ENCODE measurements at regions of chr7 and their contacts with region 1.

Region 1: GRCh38 chr7:75738987-75739795 is 450 bp upstream of the HIP1 start:
- DNase-seq: peak; percentile 99 to 100 (median 99)
- ATAC-seq: peak; percentile 92
- H3K4me3 ChIP-seq: peak overlapping the region; percentile 85 to 92
- H3K4me3 Mint-ChIP-seq: peak overlapping the region; percentile 99
- H3K27ac ChIP-seq: peak overlapping the region; percentile 71
- H3K27ac Mint-ChIP-seq: peak overlapping the region; percentile 98
- H3K4me1 ChIP-seq: peaks cover 13% of the 10 kb centered on the region
- H3K4me1 Mint-ChIP-seq: peaks cover 15% of the 10 kb centered on the region
- H3K27me3 ChIP-seq: peaks cover 0 to 4% of the 10 kb centered on the region in 2 experiments
- H3K27me3 Mint-ChIP-seq: no peaks in the 10 kb centered on the region
- CTCF ChIP-seq: no peak

Region 2: GRCh38 chr7:75072978-75073282 is 666.3 kb before region 1 on chr7:
- CTCF ChIA-PET with region 1: no interaction called
- POLR2A ChIA-PET with region 1: no interaction called
- intact Hi-C with region 1: loop called in 1 of 2 experiments (anchors 1 kb)
- DNase-seq: peak in 1 of 9 experiments; percentile 12
- ATAC-seq: no peak
- H3K4me3 ChIP-seq: peak overlapping the region; percentile 57 to 80
- H3K4me3 Mint-ChIP-seq: peak overlapping the region; percentile 94
- H3K27ac ChIP-seq: peak overlapping the region; percentile 68 to 74
- H3K27ac Mint-ChIP-seq: peak overlapping the region; percentile 96
- H3K4me1 ChIP-seq: no peaks in the 10 kb centered on the region
- H3K4me1 Mint-ChIP-seq: peaks cover 10% of the 10 kb centered on the region
- H3K27me3 ChIP-seq: no peaks in the 10 kb centered on the region
- H3K27me3 Mint-ChIP-seq: no peaks in the 10 kb centered on the region
- CTCF ChIP-seq: no peak

Region 3: GRCh38 chr7:75727881-75728592 is 11.2 kb before region 1 on chr7:
- CTCF ChIA-PET with region 1: no interaction called
- POLR2A ChIA-PET with region 1: interaction called, 10 read pairs
- intact Hi-C with region 1: no loop called
- DNase-seq: peak in 8 of 9 experiments; percentile 28 to 92 (median 52)
- ATAC-seq: peak; percentile 87
- H3K4me3 ChIP-seq: peak overlapping the region in 1 of 2 experiments; percentile 18
- H3K4me3 Mint-ChIP-seq: peak overlapping the region; percentile 44
- H3K27ac ChIP-seq: peak overlapping the region; percentile 33 to 66
- H3K27ac Mint-ChIP-seq: peak overlapping the region; percentile 76
- H3K4me1 ChIP-seq: peaks cover 25% of the 10 kb centered on the region
- H3K4me1 Mint-ChIP-seq: peaks cover 23% of the 10 kb centered on the region
- H3K27me3 ChIP-seq: no peaks in the 10 kb centered on the region
- H3K27me3 Mint-ChIP-seq: no peaks in the 10 kb centered on the region
- CTCF ChIP-seq: no peak

Region 4: GRCh38 chr7:75819711-75820110 is 80.5 kb after region 1 on chr7:
- CTCF ChIA-PET with region 1: no interaction called
- POLR2A ChIA-PET with region 1: no interaction called
- intact Hi-C with region 1: no loop called
- DNase-seq: no peak
- ATAC-seq: no peak
- H3K4me3 ChIP-seq: no peak overlapping the region
- H3K4me3 Mint-ChIP-seq: no peak overlapping the region
- H3K27ac ChIP-seq: no peak overlapping the region
- H3K27ac Mint-ChIP-seq: no peak overlapping the region
- H3K4me1 ChIP-seq: no peaks in the 10 kb centered on the region
- H3K4me1 Mint-ChIP-seq: no peaks in the 10 kb centered on the region
- H3K27me3 ChIP-seq: peaks cover 0 to 3% of the 10 kb centered on the region in 2 experiments
- H3K27me3 Mint-ChIP-seq: peaks cover 9% of the 10 kb centered on the region
- CTCF ChIP-seq: no peak

Region 5: DNA sequence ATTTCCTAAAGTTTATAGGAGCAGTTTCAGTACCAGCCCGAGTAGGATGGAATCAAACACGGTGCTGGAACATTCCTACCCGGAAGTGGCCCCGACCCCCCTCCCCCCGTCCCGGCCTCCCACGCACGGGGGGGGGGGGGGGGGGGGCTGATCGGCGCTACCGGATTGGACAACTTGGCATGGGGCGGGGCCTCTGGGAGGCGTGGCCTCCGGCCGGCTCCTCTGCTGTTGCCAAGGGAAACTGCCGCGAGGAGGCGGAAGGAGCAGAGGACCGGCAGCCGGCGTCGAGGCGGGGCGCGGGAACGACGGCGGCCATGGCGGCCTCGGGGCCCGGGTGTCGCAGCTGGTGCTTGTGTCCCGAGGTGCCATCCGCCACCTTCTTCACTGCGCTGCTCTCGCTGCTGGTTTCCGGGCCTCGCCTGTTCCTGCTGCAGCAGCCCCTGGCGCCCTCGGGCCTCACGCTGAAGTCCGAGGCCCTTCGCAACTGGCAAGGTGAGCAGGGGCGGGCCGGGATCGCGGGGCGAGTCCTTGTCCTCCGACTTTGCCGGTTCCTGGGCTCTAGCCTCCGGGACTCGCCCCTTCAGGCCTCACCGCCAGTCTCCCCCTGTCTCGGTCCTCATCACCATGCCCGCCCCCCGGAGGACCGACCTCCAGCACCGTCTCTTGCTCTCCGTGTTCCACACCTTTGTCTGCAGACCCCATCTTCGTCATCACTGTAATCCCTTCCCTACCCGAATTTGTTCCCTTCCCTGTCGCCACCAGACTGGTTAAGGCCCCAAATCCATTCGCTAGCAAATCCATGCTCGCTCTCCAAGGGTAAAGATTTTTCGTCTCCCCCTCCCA is 139.8 kb after region 1 on chr7 and contains the start of gene RHBDD2:
- CTCF ChIA-PET with region 1: no interaction called
- POLR2A ChIA-PET with region 1: no interaction called
- intact Hi-C with region 1: loop called (anchors 2 to 10 kb)
- DNase-seq: peak; percentile 95 to 98 (median 97)
- ATAC-seq: peak; percentile 93
- H3K4me3 ChIP-seq: peak within 1 kb of the TSS; percentile 69 to 100
- H3K4me3 Mint-ChIP-seq: peak within 1 kb of the TSS; percentile 93
- H3K27ac ChIP-seq: peak within 1 kb of the TSS; percentile 73 to 88
- H3K27ac Mint-ChIP-seq: peak within 1 kb of the TSS; percentile 89
- H3K4me1 ChIP-seq: peaks cover 18% of the 10 kb centered on the region
- H3K4me1 Mint-ChIP-seq: peaks cover 34% of the 10 kb centered on the region
- H3K27me3 ChIP-seq: no peaks in the 10 kb centered on the region
- H3K27me3 Mint-ChIP-seq: no peaks in the 10 kb centered on the region
- CTCF ChIP-seq: no peak
- total RNA-seq, gene RHBDD2: 167 to 173 TPM

Region 6: DNA sequence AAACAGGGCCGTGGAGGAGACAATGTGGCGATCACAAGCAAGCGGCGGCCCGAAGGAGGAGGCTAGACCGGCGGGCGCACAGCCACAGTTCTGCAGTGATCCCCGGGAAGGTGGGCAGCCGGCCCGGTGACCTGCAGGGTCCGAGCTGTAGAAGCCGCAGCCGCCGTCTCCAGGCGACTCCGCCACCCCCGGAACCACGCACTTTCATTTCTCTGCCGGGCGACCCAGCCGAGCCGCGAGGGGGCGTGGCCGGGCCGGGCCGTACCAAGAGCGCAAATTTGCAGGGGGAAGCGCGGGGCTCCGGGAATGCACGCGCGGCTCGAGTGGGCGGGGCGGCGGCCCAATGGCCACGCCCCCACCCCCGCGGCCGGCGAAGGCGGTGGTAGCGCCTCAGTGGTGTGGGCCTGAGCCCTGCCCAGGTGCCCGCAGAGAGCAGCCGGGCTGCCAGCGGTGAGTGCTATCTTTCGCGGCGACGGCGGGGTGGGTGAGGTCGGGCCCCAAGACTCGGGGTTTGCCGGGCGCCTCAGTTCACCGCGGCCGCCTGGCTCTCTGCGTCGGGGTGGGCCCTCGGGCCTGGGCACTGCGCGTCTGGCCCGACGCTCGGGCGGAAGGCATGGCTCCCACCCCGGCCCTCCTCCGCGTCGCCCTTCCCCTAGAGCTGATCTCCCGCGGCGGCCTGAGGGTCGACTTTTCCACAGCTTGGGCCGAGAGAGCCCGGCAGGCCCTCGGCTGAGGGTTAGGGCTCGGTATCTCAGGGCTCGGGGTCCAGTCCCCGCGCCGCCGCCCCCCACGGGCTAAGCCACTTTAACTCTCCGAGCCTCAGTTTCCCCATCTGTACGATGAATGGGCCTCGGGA is 175.8 kb after region 1 on chr7 and contains the start of gene POR:
- CTCF ChIA-PET with region 1: no interaction called
- POLR2A ChIA-PET with region 1: no interaction called
- intact Hi-C with region 1: loop called in 1 of 2 experiments (anchors 2 kb)
- DNase-seq: peak; percentile 94 to 99 (median 98)
- ATAC-seq: peak; percentile 94
- H3K4me3 ChIP-seq: peak within 1 kb of the TSS; percentile 98 to 99
- H3K4me3 Mint-ChIP-seq: peak within 1 kb of the TSS; percentile 92
- H3K27ac ChIP-seq: peak within 1 kb of the TSS; percentile 92 to 97
- H3K27ac Mint-ChIP-seq: peak within 1 kb of the TSS; percentile 96
- H3K4me1 ChIP-seq: peaks cover 24% of the 10 kb centered on the region
- H3K4me1 Mint-ChIP-seq: peaks cover 37% of the 10 kb centered on the region
- H3K27me3 ChIP-seq: no peaks in the 10 kb centered on the region
- H3K27me3 Mint-ChIP-seq: no peaks in the 10 kb centered on the region
- CTCF ChIP-seq: no peak
- total RNA-seq, gene POR: 64.4 to 66.7 TPM

Measured in CD8-positive, alpha-beta T cell (primary cell).